Aorta (tissue), 5 donors: ENCODE measurements at regions of chr1 and their contacts with region 1.

Region 1: GRCh38 chr1:94926915-94927404 is at the start of gene CNN3:
- DNase-seq: peak; percentile 95 to 97
- ATAC-seq: peak; percentile 94
- H3K4me3 ChIP-seq: peak within 1 kb of the TSS; percentile 81 to 89
- H3K27ac ChIP-seq: peak within 1 kb of the TSS; percentile 92 to 99
- H3K4me1 ChIP-seq: peaks cover 0 to 8% of the 10 kb centered on the region in 2 donors
- H3K27me3 ChIP-seq: no peaks in the 10 kb centered on the region
- total RNA-seq, gene CNN3: 386 to 463 TPM

Region 2: GRCh38 chr1:94854458-94855306 is 72.3 kb before region 1 on chr1:
- intact Hi-C with region 1: loop called (anchors 2 to 5 kb)
- DNase-seq: peak; percentile 92 to 93
- ATAC-seq: peak; percentile 97
- H3K4me3 ChIP-seq: peak overlapping the region in 1 of 2 donors; percentile 36
- H3K27ac ChIP-seq: peak overlapping the region; percentile 34 to 68
- H3K4me1 ChIP-seq: peaks cover 0 to 3% of the 10 kb centered on the region in 2 donors
- H3K27me3 ChIP-seq: no peaks in the 10 kb centered on the region

Region 3: GRCh38 chr1:94863919-94864318 is 63.0 kb before region 1 on chr1:
- intact Hi-C with region 1: loop called (anchors 2 to 5 kb)
- DNase-seq: peak in 1 of 2 donors; percentile 59
- ATAC-seq: peak; percentile 87
- H3K4me3 ChIP-seq: no peak overlapping the region
- H3K27ac ChIP-seq: peak overlapping the region; percentile 75 to 97
- H3K4me1 ChIP-seq: peaks cover 7 to 8% of the 10 kb centered on the region in 2 donors
- H3K27me3 ChIP-seq: no peaks in the 10 kb centered on the region

Region 4: GRCh38 chr1:95023399-95024043 is 96.6 kb after region 1 on chr1:
- intact Hi-C with region 1: loop called (anchors 5 kb)
- DNase-seq: no peak
- ATAC-seq: peak; percentile 68
- H3K4me3 ChIP-seq: no peak overlapping the region
- H3K27ac ChIP-seq: peak overlapping the region in 1 of 2 donors; percentile 76
- H3K4me1 ChIP-seq: peaks cover 5 to 9% of the 10 kb centered on the region in 2 donors
- H3K27me3 ChIP-seq: no peaks in the 10 kb centered on the region

Region 5: GRCh38 chr1:95233737-95234500 is 307.0 kb after region 1 on chr1 and contains the start of gene RWDD3:
- intact Hi-C with region 1: loop called in 1 of 2 experiments (anchors 10 kb)
- DNase-seq: peak; percentile 96 to 98
- ATAC-seq: peak; percentile 99
- H3K4me3 ChIP-seq: peak within 1 kb of the TSS; percentile 79 to 91
- H3K27ac ChIP-seq: peak within 1 kb of the TSS; percentile 50 to 85
- H3K4me1 ChIP-seq: peaks cover 3 to 4% of the 10 kb centered on the region in 2 donors
- H3K27me3 ChIP-seq: no peaks in the 10 kb centered on the region
- total RNA-seq, gene RWDD3: 16.7 to 18.3 TPM